HepG2 (cell line): ENCODE measurements at regions of chr1 and their contacts with region 1.

Region 1: GRCh38 chr1:44652445-44653106 is 21.7 kb downstream of the TMEM53 start:
- DNase-seq: peak; percentile 46
- ATAC-seq: peak; percentile 81
- H3K4me3 ChIP-seq: no peak overlapping the region
- H3K27ac ChIP-seq: no peak overlapping the region
- H3K4me1 ChIP-seq: peaks cover 21% of the 10 kb centered on the region
- H3K27me3 ChIP-seq: no peaks in the 10 kb centered on the region
- CTCF ChIP-seq: peak; percentile 96
- EP300 ChIP-seq: no peak
- POLR2A ChIP-seq: 0 out of 4 replicates have a peak, but pooled peaks of 1 of the 2 experiments have one; percentile 7
- RAD21 ChIP-seq: peak; percentile 88

Region 2: GRCh38 chr1:44377925-44378784 is 274.4 kb before region 1 on chr1:
- CTCF ChIA-PET with region 1: no interaction called
- POLR2A ChIA-PET with region 1: no interaction called
- in situ Hi-C with region 1: no loop called
- intact Hi-C with region 1: loop called (anchors 2 kb)
- DNase-seq: peak; percentile 67
- ATAC-seq: peak; percentile 85
- H3K4me3 ChIP-seq: no peak overlapping the region; a peak in 1 of 6 replicates
- H3K27ac ChIP-seq: no peak overlapping the region
- H3K4me1 ChIP-seq: peaks cover 11% of the 10 kb centered on the region
- H3K27me3 ChIP-seq: peaks cover 0 to 4% of the 10 kb centered on the region in 2 experiments; a peak in 2 of 5 replicates
- CTCF ChIP-seq: peak; percentile 89
- EP300 ChIP-seq: no peak
- POLR2A ChIP-seq: no peak
- RAD21 ChIP-seq: peak; percentile 86

Region 3: GRCh38 chr1:44609412-44609767 is 43.2 kb before region 1 on chr1:
- CTCF ChIA-PET with region 1: interaction called, 18 read pairs
- POLR2A ChIA-PET with region 1: no interaction called
- in situ Hi-C with region 1: loop called (anchors 5 kb)
- intact Hi-C with region 1: loop called (anchors 1 kb)
- DNase-seq: peak; percentile 28
- ATAC-seq: peak; percentile 88
- H3K4me3 ChIP-seq: no peak overlapping the region
- H3K27ac ChIP-seq: no peak overlapping the region
- H3K4me1 ChIP-seq: no peaks in the 10 kb centered on the region
- H3K27me3 ChIP-seq: no peaks in the 10 kb centered on the region; a peak in 1 of 5 replicates
- CTCF ChIP-seq: peak; percentile 82
- EP300 ChIP-seq: no peak
- POLR2A ChIP-seq: no peak
- RAD21 ChIP-seq: peak; percentile 63; the same call in 1 of the 2 replicates

Region 4: GRCh38 chr1:44674113-44675000 is 21.8 kb after region 1 on chr1 and contains the starts of genes ARMH1 and TMEM53:
- CTCF ChIA-PET with region 1: no interaction called
- POLR2A ChIA-PET with region 1: interaction called, 9 read pairs
- in situ Hi-C with region 1: no loop called
- intact Hi-C with region 1: loop called (anchors 1 kb)
- DNase-seq: peak; percentile 98
- ATAC-seq: peak; percentile 93
- H3K4me3 ChIP-seq: peak within 1 kb of the TSS; percentile 64 to 76 (median 67)
- H3K27ac ChIP-seq: peak within 1 kb of the TSS; percentile 93
- H3K4me1 ChIP-seq: peaks cover 65% of the 10 kb centered on the region
- H3K27me3 ChIP-seq: no peaks in the 10 kb centered on the region
- CTCF ChIP-seq: peak; percentile 32; the same call in 1 of the 2 replicates
- EP300 ChIP-seq: peak in 1 of 2 experiments; percentile 18; a peak in 2 of 4 replicates
- POLR2A ChIP-seq: peak; percentile 70 to 91
- RAD21 ChIP-seq: peak; percentile 47; the same call in 1 of the 2 replicates
- total RNA-seq, gene ARMH1: not detected in 2 replicates
- total RNA-seq, gene TMEM53: 12.6 and 13.8 TPM in 2 replicates

Region 5: GRCh38 chr1:44696789-44697345 is 44.3 kb after region 1 on chr1:
- CTCF ChIA-PET with region 1: no interaction called
- POLR2A ChIA-PET with region 1: no interaction called
- in situ Hi-C with region 1: no loop called
- intact Hi-C with region 1: no loop called
- DNase-seq: no peak
- ATAC-seq: no peak
- H3K4me3 ChIP-seq: no peak overlapping the region
- H3K27ac ChIP-seq: no peak overlapping the region
- H3K4me1 ChIP-seq: peaks cover 47% of the 10 kb centered on the region
- H3K27me3 ChIP-seq: no peaks in the 10 kb centered on the region
- CTCF ChIP-seq: no peak
- EP300 ChIP-seq: no peak
- POLR2A ChIP-seq: no peak
- RAD21 ChIP-seq: no peak

Region 6: DNA sequence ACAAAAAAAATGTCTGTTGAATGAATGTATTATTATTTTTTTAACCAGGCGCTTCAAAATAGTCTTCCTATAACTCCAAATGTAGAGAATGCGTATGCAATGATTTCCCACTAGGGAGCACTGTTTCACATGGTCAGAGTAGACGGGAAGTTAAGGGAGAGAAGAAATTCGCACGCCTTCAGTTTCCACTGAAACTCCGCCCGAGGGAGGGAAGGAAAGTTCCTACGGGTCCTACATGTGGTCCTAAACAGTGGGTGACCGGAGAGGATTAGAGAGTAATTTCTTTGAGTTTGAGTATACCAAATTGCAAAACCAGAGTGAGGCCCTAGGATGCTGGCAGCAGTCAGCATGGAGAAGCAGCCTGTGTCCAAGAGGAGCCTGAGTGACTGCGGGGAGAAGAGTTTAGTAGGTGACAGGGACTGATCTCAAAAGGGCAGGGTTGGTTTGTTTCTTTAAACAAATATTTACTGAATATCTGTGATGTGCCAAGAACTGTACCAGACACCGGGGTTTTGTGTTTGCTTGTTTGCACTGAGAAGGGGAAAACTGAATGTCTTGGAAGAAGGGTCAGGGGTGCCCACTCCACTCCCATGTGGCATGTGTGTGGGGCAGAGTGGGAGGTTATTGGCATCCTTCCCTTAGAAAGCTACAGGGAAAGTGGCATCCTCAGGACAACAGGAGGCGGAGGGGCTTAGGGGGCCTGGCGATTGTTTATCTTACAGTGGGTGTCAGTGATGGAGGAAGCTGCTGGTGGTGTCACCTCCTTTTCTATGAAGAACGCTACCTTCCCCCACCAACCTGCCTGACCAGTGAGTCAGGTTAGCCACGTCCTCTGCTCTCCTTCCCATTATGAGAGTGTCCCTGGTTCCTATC is 55.6 kb after region 1 on chr1:
- CTCF ChIA-PET with region 1: interaction called, 7 read pairs
- POLR2A ChIA-PET with region 1: no interaction called
- in situ Hi-C with region 1: no loop called
- intact Hi-C with region 1: loop called (anchors 5 kb)
- DNase-seq: peak; percentile 54
- ATAC-seq: peak; percentile 84
- H3K4me3 ChIP-seq: peak overlapping the region in 2 of 3 experiments; percentile 27 to 37; a peak in 3 of 6 replicates
- H3K27ac ChIP-seq: peak overlapping the region; percentile 20
- H3K4me1 ChIP-seq: peaks cover 59% of the 10 kb centered on the region
- H3K27me3 ChIP-seq: no peaks in the 10 kb centered on the region; a peak in 1 of 5 replicates
- CTCF ChIP-seq: peak; percentile 70
- EP300 ChIP-seq: peak in 1 of 2 experiments; percentile 60; a peak in 2 of 4 replicates
- POLR2A ChIP-seq: no peak
- RAD21 ChIP-seq: peak; percentile 13; the same call in 1 of the 2 replicates